Common myeloid progenitor, CD34-positive (primary cell): ENCODE measurements at regions of chr1 and their contacts with region 1.

Region 1: GRCh38 chr1:161382214-161383019 is 14.7 kb upstream of the CFAP126 start:
- DNase-seq: peak; percentile 58 to 75 (median 71)
- H3K4me3 ChIP-seq: no peak overlapping the region
- H3K27ac ChIP-seq: no peak overlapping the region
- H3K4me1 ChIP-seq: peaks cover 0 to 5% (median 4%) of the 10 kb centered on the region in 4 experiments
- H3K27me3 ChIP-seq: no peaks in the 10 kb centered on the region

Region 2: DNA sequence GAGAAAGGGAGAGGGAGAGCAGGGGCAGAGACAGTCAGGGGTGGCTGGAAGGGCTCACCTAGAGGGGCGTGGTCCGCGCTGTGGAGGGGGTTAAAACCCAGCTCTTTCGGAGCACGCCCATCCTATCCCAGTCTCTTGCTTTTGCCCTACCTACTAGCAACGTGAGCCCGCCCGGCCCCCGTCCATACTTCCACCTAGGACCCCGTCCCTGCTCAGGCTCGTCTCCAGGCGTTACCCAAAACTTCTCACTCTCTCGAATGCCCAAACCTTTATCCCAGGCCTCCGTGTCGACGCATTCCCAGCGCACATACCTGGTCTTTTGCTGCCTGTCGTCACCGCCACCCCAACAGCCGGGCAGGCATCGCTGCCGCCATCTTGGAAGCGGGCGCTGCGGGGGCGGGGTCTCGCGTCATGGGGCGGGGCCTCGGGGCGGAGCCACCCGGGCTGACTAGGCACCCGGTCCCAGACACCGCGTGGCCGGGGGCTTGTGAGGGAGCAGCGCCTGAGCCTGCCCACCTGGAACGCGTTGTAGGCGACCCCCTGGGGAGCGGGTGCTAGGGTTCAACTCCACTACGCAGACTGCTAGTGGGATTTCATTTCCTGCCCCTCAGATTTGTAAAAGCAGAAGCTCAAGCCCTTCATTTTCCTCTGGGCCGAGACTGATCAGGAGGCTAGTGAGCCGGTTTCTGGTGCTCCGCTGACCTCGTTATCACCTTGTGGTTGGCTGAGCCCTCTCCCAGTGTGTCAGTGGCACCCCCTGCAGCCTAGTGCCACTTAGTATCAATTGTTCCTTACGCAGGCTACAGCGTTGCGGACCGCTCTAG is 205.1 kb before region 1 on chr1 and contains the start of gene B4GALT3:
- CTCF ChIA-PET with region 1: interaction called, 13 read pairs
- POLR2A ChIA-PET with region 1: no interaction called
- DNase-seq: peak; percentile 83 to 90 (median 86)
- H3K4me3 ChIP-seq: peak within 1 kb of the TSS; percentile 65 to 96 (median 94)
- H3K27ac ChIP-seq: peak within 1 kb of the TSS; percentile 77 to 86
- H3K4me1 ChIP-seq: peaks cover 1 to 32% (median 22%) of the 10 kb centered on the region in 4 experiments
- H3K27me3 ChIP-seq: no peaks in the 10 kb centered on the region

Region 3: GRCh38 chr1:161201828-161202725 is 180.3 kb before region 1 on chr1 and contains the start of gene NDUFS2:
- CTCF ChIA-PET with region 1: interaction called, 111 read pairs
- POLR2A ChIA-PET with region 1: no interaction called
- DNase-seq: peak; percentile 98 to 99 (median 98)
- H3K4me3 ChIP-seq: peak within 1 kb of the TSS; percentile 66 to 98 (median 89)
- H3K27ac ChIP-seq: peak within 1 kb of the TSS; percentile 77 to 89
- H3K4me1 ChIP-seq: peaks cover 0 to 54% (median 38%) of the 10 kb centered on the region in 4 experiments
- H3K27me3 ChIP-seq: no peaks in the 10 kb centered on the region

Region 4: DNA sequence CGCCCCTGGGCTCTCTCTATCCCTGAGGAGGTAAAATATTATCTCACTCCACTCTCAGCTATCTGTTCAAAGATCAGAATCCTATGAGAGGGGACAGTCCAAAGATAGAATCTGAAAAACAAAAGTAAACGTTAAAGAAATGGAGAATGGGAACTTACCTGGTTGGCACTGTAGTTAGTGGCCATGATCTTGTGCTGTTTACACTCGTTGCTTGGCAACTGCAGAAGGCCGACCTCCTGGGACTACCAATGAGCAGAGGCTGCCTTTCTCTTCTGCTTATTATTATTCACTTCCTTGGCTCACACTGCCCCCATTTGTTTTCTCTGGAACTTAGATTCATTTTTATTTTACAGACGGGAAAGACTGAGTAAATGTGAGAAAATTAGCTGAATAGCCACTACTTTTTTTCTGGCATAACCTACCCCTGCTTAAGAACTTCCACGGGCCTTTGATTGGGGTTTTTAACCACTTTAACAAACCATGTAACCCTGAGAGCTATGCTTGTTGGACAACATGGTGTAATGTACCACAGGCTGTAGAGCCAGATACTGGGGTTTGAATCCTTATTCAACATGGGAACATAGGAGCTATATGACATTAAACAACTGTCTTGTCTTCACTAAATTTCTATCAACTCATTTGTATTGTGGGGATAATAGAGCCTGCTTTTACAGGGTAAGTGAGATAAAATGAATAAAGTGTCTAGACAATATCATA is 14.6 kb before region 1 on chr1 and contains the start of gene CFAP126:
- CTCF ChIA-PET with region 1: interaction called, 26 read pairs
- POLR2A ChIA-PET with region 1: no interaction called
- DNase-seq: peak; percentile 92 to 95 (median 94)
- H3K4me3 ChIP-seq: peak within 1 kb of the TSS in 3 of 7 experiments; percentile 23 to 51 (median 41)
- H3K27ac ChIP-seq: peak within 1 kb of the TSS; percentile 81 to 94
- H3K4me1 ChIP-seq: peaks cover 0 to 8% (median 2%) of the 10 kb centered on the region in 4 experiments
- H3K27me3 ChIP-seq: no peaks in the 10 kb centered on the region

Region 5: DNA sequence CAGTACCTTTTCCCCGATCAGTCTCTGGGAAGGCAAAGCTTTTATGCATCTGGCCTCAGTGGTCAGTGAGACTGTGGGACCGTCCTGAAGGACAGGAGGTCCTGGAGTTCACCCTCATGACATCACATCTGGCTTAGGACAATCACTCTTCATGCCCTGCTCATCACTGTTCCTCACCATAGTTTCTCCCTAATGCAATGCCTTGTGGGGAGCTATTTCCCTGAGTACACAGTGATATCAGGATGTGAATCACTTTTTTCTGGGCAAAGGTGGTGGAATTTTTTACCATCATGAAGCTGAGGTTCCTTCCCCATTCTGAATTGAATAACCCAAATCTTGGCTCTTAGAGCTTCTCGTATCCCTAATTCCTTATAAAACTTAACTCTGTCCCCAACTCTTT is 20.0 kb after region 1 on chr1:
- CTCF ChIA-PET with region 1: no interaction called
- POLR2A ChIA-PET with region 1: no interaction called
- DNase-seq: no peak
- H3K4me3 ChIP-seq: no peak overlapping the region
- H3K27ac ChIP-seq: no peak overlapping the region
- H3K4me1 ChIP-seq: peaks cover 3 to 15% (median 9%) of the 10 kb centered on the region in 4 experiments
- H3K27me3 ChIP-seq: peaks cover 0 to 8% (median 0%) of the 10 kb centered on the region in 5 experiments

Region 6: GRCh38 chr1:161499099-161500039 is 117.0 kb after region 1 on chr1:
- CTCF ChIA-PET with region 1: no interaction called
- POLR2A ChIA-PET with region 1: no interaction called
- DNase-seq: no peak
- H3K4me3 ChIP-seq: no peak overlapping the region
- H3K27ac ChIP-seq: no peak overlapping the region
- H3K4me1 ChIP-seq: peaks cover 0 to 45% (median 7%) of the 10 kb centered on the region in 4 experiments
- H3K27me3 ChIP-seq: peaks cover 0 to 35% (median 10%) of the 10 kb centered on the region in 5 experiments